ENCODE measurements at regions of chr7 and their contacts with region 1.

Region 1: GRCh38 chr7:17486835-17487234 is 188.4 kb downstream of the AHR start:
- DNase-seq: no peak
- H3K4me3 ChIP-seq: no peak overlapping the region
- H3K27ac ChIP-seq: no peak overlapping the region
- H3K4me1 ChIP-seq: no peaks in the 10 kb centered on the region
- H3K27me3 ChIP-seq: no peaks in the 10 kb centered on the region
- CTCF ChIP-seq: no peak
- POLR2A ChIP-seq: no peak

Region 2: DNA sequence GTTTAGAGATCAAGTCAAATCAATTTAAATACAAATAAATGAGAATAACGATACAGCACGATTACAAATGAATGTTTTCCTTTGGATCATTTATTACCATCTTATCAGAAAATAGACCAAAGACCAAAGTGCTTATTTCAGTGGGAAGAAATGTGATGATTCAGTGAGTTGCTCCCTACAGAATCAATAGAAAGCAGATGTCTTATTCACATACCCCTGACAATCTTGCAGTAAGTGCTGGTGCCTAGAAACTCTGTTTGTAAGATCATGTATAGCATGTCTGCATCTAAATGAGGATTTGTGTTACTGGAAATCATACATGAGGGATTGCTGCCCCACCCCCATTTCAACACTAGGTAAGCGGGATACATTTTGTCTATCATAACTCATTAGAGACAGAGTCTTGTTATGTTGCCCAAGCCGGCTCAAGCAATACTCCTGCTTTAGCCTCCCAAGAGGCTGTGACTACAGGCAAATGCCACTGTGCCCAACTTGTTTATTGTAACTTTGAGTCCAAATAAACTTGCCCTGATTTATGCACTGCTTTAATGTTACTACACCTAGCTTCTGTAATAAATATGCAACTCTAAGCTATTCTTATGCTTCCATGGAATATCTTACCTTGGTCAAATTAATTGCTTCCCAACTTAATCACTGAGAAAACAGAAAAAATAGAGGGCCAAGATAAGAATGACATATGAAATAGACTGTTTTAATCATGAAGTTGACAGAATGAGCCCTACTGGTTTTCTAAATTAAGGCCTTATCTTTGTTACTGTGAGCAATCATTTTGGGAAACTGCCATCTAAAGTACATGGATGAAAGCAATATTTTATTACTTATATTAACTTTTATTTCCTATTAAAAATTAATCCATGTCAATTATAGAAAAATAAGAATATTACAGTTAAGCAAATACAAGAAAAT is 105.8 kb before region 1 on chr7:
- CTCF ChIA-PET with region 1: no interaction called
- POLR2A ChIA-PET with region 1: no interaction called
- dilution Hi-C with region 1: no loop called
- intact Hi-C with region 1: no loop called
- DNase-seq: no peak
- H3K4me3 ChIP-seq: no peak overlapping the region
- H3K27ac ChIP-seq: no peak overlapping the region
- H3K4me1 ChIP-seq: no peaks in the 10 kb centered on the region
- H3K27me3 ChIP-seq: no peaks in the 10 kb centered on the region
- CTCF ChIP-seq: no peak
- POLR2A ChIP-seq: no peak

Region 3: DNA sequence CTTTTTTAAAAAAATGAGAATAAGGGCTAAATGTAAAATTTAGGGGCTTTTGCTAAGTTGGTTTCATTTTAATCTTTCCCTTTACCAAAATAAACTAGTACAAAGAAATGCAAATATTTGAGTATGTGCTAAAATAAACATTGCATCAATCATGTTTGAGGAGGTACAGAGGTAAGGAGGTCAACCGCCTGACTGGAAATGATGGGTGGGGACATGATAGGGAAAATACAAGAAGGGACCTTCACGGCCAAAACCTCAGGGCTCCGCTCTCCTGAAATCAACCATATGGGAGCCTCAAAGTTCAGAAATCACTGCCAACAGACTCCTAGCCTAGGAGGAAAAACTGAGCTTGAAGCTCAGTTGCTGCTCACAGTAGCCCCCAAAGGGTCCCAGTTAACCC is 19.3 kb after region 1 on chr7:
- CTCF ChIA-PET with region 1: no interaction called
- POLR2A ChIA-PET with region 1: no interaction called
- dilution Hi-C with region 1: no loop called
- intact Hi-C with region 1: loop called (anchors 1 kb)
- DNase-seq: no peak
- H3K4me3 ChIP-seq: no peak overlapping the region
- H3K27ac ChIP-seq: no peak overlapping the region
- H3K4me1 ChIP-seq: no peaks in the 10 kb centered on the region
- H3K27me3 ChIP-seq: no peaks in the 10 kb centered on the region
- CTCF ChIP-seq: no peak
- POLR2A ChIP-seq: no peak